Left lung (tissue), 14 donors: ENCODE measurements at regions of chr21 and their contacts with region 1.

Region 1: GRCh38 chr21:31117128-31117916 is 79.0 kb upstream of the KRTAP19-8 start:
- DNase-seq: no peak
- ATAC-seq: peak; percentile 69
- H3K4me3 ChIP-seq: no peak overlapping the region
- H3K27ac ChIP-seq: no peak overlapping the region
- H3K4me1 ChIP-seq: peaks cover 0 to 18% of the 10 kb centered on the region in 2 donors
- H3K27me3 ChIP-seq: no peaks in the 10 kb centered on the region
- CTCF ChIP-seq: no peak

Region 2: GRCh38 chr21:31604591-31605190 is 487.4 kb after region 1 on chr21:
- intact Hi-C with region 1: loop called in 1 of 2 experiments (anchors 10 kb)
- DNase-seq: peak; percentile 56 to 82 (median 70)
- ATAC-seq: peak; percentile 85
- H3K4me3 ChIP-seq: no peak overlapping the region
- H3K27ac ChIP-seq: no peak overlapping the region
- H3K4me1 ChIP-seq: no peaks in the 10 kb centered on the region
- H3K27me3 ChIP-seq: no peaks in the 10 kb centered on the region
- CTCF ChIP-seq: peak; percentile 88 to 93